Activated CD4-positive, alpha-beta memory T cell treated with anti-CD3 and anti-CD28 coated beads for 36 hours (primary cell): ENCODE measurements at regions of chr7 and their contacts with region 1.

Region 1: GRCh38 chr7:95527033-95527775 is 41.5 kb downstream of the ASB4 start:
- DNase-seq: peak; percentile 9
- H3K4me3 Mint-ChIP-seq: no peak overlapping the region
- H3K27ac Mint-ChIP-seq: no peak overlapping the region
- H3K4me1 Mint-ChIP-seq: no peaks in the 10 kb centered on the region
- H3K27me3 Mint-ChIP-seq: peaks cover 8% of the 10 kb centered on the region

Region 2: GRCh38 chr7:95660023-95660434 is 132.8 kb after region 1 on chr7:
- CTCF ChIA-PET with region 1: no interaction called
- POLR2A ChIA-PET with region 1: no interaction called
- intact Hi-C with region 1: no loop called
- DNase-seq: no peak
- H3K4me3 Mint-ChIP-seq: no peak overlapping the region
- H3K27ac Mint-ChIP-seq: no peak overlapping the region
- H3K4me1 Mint-ChIP-seq: no peaks in the 10 kb centered on the region
- H3K27me3 Mint-ChIP-seq: no peaks in the 10 kb centered on the region

Region 3: GRCh38 chr7:95690367-95690947 is 163.3 kb after region 1 on chr7:
- CTCF ChIA-PET with region 1: interaction called, 16 read pairs
- POLR2A ChIA-PET with region 1: no interaction called
- intact Hi-C with region 1: loop called (anchors 1 kb)
- DNase-seq: no peak
- H3K4me3 Mint-ChIP-seq: no peak overlapping the region
- H3K27ac Mint-ChIP-seq: no peak overlapping the region
- H3K4me1 Mint-ChIP-seq: no peaks in the 10 kb centered on the region
- H3K27me3 Mint-ChIP-seq: peaks cover 2% of the 10 kb centered on the region